ENCODE measurements at regions of chr16 and their contacts with region 1.

Region 1: DNA sequence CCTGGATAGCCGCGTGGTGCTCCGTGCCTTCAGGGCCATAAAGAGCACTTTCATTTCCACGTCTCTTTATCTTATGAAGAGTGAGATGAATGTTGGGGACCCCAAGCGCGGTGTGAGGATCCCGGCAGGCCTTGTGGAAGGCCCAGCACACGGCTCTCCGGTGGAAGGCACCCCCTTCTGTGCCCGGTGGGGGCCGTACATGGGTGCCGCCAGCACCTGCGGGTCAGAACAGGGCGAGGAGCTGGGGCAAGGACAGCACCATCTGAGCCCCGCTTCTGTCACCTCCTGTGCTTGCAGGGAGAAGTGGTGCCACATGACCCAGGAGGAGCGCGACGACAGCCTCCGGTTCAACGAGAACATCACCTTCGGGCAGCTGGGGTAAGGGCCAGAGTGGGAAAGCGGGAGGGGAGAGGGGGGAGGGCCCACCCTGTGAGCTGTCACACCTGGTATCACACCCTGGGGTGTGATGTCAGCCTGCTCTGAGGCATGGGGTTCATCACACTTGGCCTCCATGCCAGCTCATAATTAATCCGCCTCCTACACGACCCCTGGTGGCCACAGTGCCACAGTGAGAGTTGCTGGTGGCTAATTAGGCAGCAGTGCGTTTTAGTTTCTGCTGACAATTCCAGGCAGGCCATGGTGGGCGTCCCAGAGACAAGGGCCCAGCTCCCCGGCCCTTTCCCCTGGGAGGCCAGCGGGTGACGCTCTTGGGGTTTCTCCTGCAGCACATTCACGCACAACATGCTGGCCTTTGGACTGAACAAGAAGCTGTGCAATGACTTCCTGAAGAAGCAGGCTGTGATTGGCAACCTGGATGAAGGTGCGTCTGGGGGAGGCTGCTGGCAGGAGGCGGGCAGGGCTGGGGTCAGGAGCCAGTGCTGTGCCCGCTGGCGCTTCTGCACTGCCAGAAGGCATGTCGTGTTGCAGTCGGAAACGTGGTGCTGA is 25.7 kb downstream of the CIBAR2 start:
- DNase-seq: peak; percentile 93
- ATAC-seq: peak; percentile 96
- H3K4me3 Mint-ChIP-seq: no peak overlapping the region
- H3K27ac Mint-ChIP-seq: no peak overlapping the region
- H3K4me1 Mint-ChIP-seq: peaks cover 37% of the 10 kb centered on the region
- H3K27me3 Mint-ChIP-seq: no peaks in the 10 kb centered on the region
- CTCF ChIP-seq: peak; percentile 77

Region 2: DNA sequence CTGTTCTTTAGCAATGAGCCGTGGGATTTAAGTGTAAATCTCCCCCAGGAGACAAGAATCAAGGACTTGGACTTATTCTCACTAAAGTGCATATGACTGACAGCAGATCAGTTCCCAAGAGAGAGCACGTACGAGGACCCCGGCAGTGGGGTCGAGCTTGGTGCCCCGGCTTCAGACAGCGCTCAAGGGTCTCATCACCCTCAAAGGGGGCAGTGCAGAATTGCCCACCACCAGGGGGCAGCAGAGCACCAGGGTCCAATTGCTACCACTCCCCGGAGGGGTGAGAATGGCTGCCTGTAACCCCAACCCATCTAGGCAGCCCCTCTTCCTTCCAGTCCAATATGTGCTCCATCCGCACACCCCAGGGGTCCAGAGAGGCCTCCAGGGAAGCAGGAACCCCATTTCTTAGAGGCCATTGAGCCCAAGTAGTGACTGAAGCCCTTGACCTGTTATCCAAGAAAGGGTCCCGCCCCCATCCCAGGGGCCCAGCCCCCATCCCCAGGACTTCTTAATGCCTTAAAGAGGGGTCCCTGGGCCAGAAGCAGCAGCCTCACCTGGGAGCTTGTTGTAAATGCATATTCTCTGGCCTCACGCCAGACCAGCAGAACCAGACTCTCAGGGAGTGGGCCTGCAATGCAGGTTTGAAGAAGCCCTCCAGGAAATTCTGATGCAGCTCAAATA is 161.4 kb before region 1 on chr16:
- CTCF ChIA-PET with region 1: interaction called, 8 read pairs
- POLR2A ChIA-PET with region 1: no interaction called
- intact Hi-C with region 1: loop called (anchors 5 kb)
- DNase-seq: peak; percentile 82
- ATAC-seq: peak; percentile 62
- H3K4me3 Mint-ChIP-seq: no peak overlapping the region
- H3K27ac Mint-ChIP-seq: no peak overlapping the region
- H3K4me1 Mint-ChIP-seq: no peaks in the 10 kb centered on the region
- H3K27me3 Mint-ChIP-seq: peaks cover 3% of the 10 kb centered on the region
- CTCF ChIP-seq: peak; percentile 92

Region 3: DNA sequence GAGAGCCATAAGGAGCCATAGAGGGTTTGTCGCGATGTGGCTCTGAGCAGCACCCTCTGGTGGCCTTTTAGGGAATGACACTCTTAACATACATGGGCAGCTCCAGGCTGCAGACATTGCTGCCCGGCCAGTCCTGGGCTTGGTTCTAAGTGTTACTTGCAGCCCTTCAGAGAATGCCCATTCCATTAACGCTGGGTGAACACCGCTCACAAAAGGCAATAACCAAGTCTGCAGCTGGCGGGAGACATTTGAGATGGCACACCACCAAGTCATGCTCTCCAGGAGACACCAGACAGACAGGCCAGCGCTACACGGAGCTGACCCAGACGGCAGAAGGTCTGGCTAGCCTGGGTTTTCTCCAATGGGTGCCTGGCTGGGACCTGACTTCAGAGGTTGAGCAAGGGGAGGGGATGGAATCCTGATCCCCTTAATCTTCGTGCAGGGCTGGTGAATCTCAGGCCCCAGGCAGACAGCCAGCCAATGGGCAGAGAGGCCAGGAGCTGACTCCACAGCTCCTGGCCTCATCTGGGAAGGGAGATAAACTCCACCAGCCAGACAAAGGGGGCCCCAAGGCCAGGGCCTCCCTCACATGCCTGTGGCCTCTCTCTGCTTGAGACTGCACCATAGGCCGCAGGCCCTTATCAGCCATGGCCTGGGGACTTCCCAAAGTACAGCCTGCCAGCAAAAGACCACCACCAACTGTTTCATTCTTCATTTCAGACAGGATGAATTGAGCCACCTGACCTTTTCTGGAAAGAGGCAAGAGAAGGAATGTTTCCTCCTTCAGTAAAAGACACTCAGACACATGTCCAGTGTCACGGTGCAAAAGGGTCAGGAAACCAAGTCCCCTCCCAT is 134.1 kb before region 1 on chr16:
- CTCF ChIA-PET with region 1: no interaction called
- POLR2A ChIA-PET with region 1: no interaction called
- intact Hi-C with region 1: no loop called
- DNase-seq: peak; percentile 82
- ATAC-seq: peak; percentile 95
- H3K4me3 Mint-ChIP-seq: no peak overlapping the region
- H3K27ac Mint-ChIP-seq: no peak overlapping the region
- H3K4me1 Mint-ChIP-seq: peaks cover 2% of the 10 kb centered on the region
- H3K27me3 Mint-ChIP-seq: peaks cover 3% of the 10 kb centered on the region
- CTCF ChIP-seq: peak; percentile 84

Region 4: GRCh38 chr16:85004559-85005205 is 81.9 kb before region 1 on chr16:
- CTCF ChIA-PET with region 1: interaction called, 11 read pairs
- POLR2A ChIA-PET with region 1: no interaction called
- intact Hi-C with region 1: no loop called
- DNase-seq: no peak
- ATAC-seq: no peak
- H3K4me3 Mint-ChIP-seq: no peak overlapping the region
- H3K27ac Mint-ChIP-seq: no peak overlapping the region
- H3K4me1 Mint-ChIP-seq: peaks cover 59% of the 10 kb centered on the region
- H3K27me3 Mint-ChIP-seq: no peaks in the 10 kb centered on the region
- CTCF ChIP-seq: no peak

Region 5: GRCh38 chr16:85010931-85011845 is 75.4 kb before region 1 on chr16 and contains the start of gene ZDHHC7:
- CTCF ChIA-PET with region 1: interaction called, 9 read pairs
- POLR2A ChIA-PET with region 1: interaction called, 4 read pairs
- intact Hi-C with region 1: loop called (anchors 5 kb)
- DNase-seq: peak; percentile 89
- ATAC-seq: peak; percentile 97
- H3K4me3 Mint-ChIP-seq: peak within 1 kb of the TSS; percentile 96
- H3K27ac Mint-ChIP-seq: peak within 1 kb of the TSS; percentile 97
- H3K4me1 Mint-ChIP-seq: peaks cover 32% of the 10 kb centered on the region
- H3K27me3 Mint-ChIP-seq: no peaks in the 10 kb centered on the region
- CTCF ChIP-seq: no peak
- total RNA-seq, gene ZDHHC7: 20.7 to 23.6 TPM

Region 6: GRCh38 chr16:85027349-85027957 is 59.2 kb before region 1 on chr16 and contains the start of gene KIAA0513:
- CTCF ChIA-PET with region 1: interaction called, 24 read pairs
- POLR2A ChIA-PET with region 1: interaction called, 3 read pairs
- intact Hi-C with region 1: no loop called
- DNase-seq: peak; percentile 95
- ATAC-seq: peak; percentile 64
- H3K4me3 Mint-ChIP-seq: peak within 1 kb of the TSS; percentile 85
- H3K27ac Mint-ChIP-seq: peak within 1 kb of the TSS; percentile 92
- H3K4me1 Mint-ChIP-seq: peaks cover 42% of the 10 kb centered on the region
- H3K27me3 Mint-ChIP-seq: no peaks in the 10 kb centered on the region
- CTCF ChIP-seq: no peak
- total RNA-seq, gene KIAA0513: 3.9 to 5.3 TPM

Region 7: GRCh38 chr16:85055503-85056210 is 31.0 kb before region 1 on chr16:
- CTCF ChIA-PET with region 1: interaction called, 18 read pairs
- POLR2A ChIA-PET with region 1: no interaction called
- intact Hi-C with region 1: no loop called
- DNase-seq: peak; percentile 94
- ATAC-seq: peak; percentile 91
- H3K4me3 Mint-ChIP-seq: peak overlapping the region; percentile 72
- H3K27ac Mint-ChIP-seq: peak overlapping the region; percentile 91
- H3K4me1 Mint-ChIP-seq: peaks cover 45% of the 10 kb centered on the region
- H3K27me3 Mint-ChIP-seq: no peaks in the 10 kb centered on the region
- CTCF ChIP-seq: no peak

Region 8: DNA sequence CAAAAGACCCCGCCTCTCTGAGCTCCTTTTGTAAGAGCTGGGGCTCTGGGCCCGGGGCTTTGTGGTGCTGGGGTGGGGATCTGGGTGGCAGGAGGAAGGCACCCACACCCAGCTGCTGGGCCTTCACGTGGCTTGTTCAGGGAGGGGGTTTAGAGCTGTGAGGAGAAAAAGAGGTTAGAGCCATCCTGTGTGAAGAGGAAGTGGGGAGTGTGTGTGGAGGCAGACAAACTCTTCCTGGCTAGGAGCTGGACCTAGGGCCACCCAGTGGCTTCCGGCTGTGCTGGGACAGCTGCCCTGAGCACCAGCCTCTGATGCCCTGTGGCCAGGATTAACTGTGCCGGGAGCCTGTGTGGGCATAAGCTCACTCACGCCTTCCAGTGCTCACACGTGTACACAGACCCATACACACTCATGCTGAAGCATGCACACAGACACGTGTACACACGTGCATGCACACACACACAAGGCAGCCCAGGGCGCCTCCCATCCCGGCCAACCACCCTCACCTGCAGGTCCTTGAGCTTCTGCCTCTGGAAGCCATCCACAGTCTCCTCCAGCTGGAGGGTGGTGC is 18.3 kb after region 1 on chr16:
- CTCF ChIA-PET with region 1: interaction called, 14 read pairs
- POLR2A ChIA-PET with region 1: no interaction called
- intact Hi-C with region 1: no loop called
- DNase-seq: peak; percentile 28
- ATAC-seq: peak; percentile 82
- H3K4me3 Mint-ChIP-seq: no peak overlapping the region
- H3K27ac Mint-ChIP-seq: peak overlapping the region; percentile 87
- H3K4me1 Mint-ChIP-seq: peaks cover 33% of the 10 kb centered on the region
- H3K27me3 Mint-ChIP-seq: no peaks in the 10 kb centered on the region
- CTCF ChIP-seq: no peak